ENCODE measurements at regions of chr18 and their contacts with region 1.

Region 1: DNA sequence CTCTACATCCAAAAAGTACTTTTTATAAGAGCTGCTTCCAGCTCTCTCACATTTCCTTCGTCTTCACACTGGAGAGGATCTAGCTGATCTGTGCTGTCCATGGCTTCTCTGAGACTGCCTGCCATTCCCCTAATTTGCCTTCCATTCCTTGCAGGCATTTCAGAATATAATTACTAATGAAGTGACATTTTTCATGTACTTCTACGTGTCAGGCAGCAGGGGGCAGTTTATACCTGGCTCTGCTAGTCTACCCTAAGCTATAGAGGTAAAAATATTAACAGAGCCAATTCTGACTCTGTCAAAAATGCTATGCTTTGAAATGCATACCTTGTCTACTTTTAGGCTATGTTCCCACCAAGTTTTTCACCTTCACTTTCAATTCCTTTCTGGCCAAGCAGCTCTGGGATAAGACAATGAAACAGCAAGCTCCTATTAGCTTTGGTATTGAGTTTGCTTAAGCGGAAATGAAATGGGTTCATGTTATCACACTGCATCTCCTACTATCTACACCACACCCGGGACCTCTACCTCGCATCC is 81.9 kb downstream of the MEP1B start:
- DNase-seq: peak in 1 of 3 donors; percentile 52
- ATAC-seq: peak; percentile 90 to 95 (median 92)
- H3K4me3 ChIP-seq: no peak overlapping the region
- H3K27ac ChIP-seq: no peak overlapping the region
- H3K4me1 ChIP-seq: no peaks in the 10 kb centered on the region
- H3K27me3 ChIP-seq: no peaks in the 10 kb centered on the region
- CTCF ChIP-seq: peak; percentile 60 to 82 (median 66)
- POLR2A ChIP-seq: no peak

Region 2: DNA sequence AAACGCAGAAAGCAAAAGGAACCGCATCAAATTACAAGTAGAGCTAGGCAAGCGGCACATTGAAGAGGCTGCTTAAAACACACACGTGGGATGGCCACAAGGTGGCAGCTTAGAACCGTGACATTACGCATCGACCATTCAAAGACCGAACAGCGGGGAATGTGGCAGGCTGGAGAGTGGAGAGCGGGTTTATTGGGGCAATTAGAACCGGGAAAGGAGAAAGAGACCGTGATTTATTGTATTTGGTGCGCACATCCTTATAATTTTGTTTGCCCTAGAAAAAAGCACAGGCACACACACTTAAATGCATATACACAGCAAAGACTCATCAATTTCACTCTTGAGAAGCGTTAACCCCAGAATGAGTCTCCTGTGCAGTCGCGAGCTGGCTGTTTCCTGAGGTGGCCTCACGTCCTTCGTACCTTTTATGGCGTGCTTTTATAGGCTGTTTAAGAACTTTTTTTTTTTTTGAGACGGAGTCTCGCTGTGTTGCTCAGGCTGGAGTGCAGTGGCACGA is 113.6 kb before region 1 on chr18:
- intact Hi-C with region 1: loop called in 1 of 2 experiments (anchors 10 kb)
- DNase-seq: peak; percentile 72 to 84 (median 80)
- ATAC-seq: peak; percentile 99 to 100 (median 100)
- H3K4me3 ChIP-seq: peak overlapping the region; percentile 6 to 20 (median 18)
- H3K27ac ChIP-seq: no peak overlapping the region
- H3K4me1 ChIP-seq: no peaks in the 10 kb centered on the region
- H3K27me3 ChIP-seq: no peaks in the 10 kb centered on the region
- CTCF ChIP-seq: peak; percentile 75 to 88 (median 84)
- POLR2A ChIP-seq: no peak

Region 3: GRCh38 chr18:32470713-32471633 is 199.2 kb after region 1 on chr18 and contains the start of gene GAREM1:
- intact Hi-C with region 1: loop called in 1 of 2 experiments (anchors 10 kb)
- DNase-seq: peak; percentile 95 to 98 (median 97)
- ATAC-seq: peak; percentile 87 to 95 (median 92)
- H3K4me3 ChIP-seq: peak within 1 kb of the TSS; percentile 69 to 73 (median 73)
- H3K27ac ChIP-seq: peak within 1 kb of the TSS; percentile 53 to 89 (median 81)
- H3K4me1 ChIP-seq: peaks cover 0 to 8% (median 2%) of the 10 kb centered on the region in 4 donors
- H3K27me3 ChIP-seq: no peaks in the 10 kb centered on the region
- CTCF ChIP-seq: peak; percentile 69 to 92 (median 81)
- POLR2A ChIP-seq: peak; percentile 98
- total RNA-seq, gene GAREM1: 5.5 to 11.3 (median 6.6) TPM

Region 4: GRCh38 chr18:32552421-32553030 is 280.8 kb after region 1 on chr18:
- intact Hi-C with region 1: loop called (anchors 5 to 10 kb)
- DNase-seq: peak; percentile 35 to 72 (median 56)
- ATAC-seq: peak; percentile 91 to 96 (median 95)
- H3K4me3 ChIP-seq: no peak overlapping the region
- H3K27ac ChIP-seq: no peak overlapping the region
- H3K4me1 ChIP-seq: no peaks in the 10 kb centered on the region
- H3K27me3 ChIP-seq: no peaks in the 10 kb centered on the region
- CTCF ChIP-seq: peak; percentile 78 to 83 (median 81)
- POLR2A ChIP-seq: no peak